ENCODE measurements at regions of chr12 and their contacts with region 1.

Region 1: GRCh38 chr12:16385782-16386646 is 38.6 kb downstream of the MGST1 start:
- DNase-seq: no peak
- ATAC-seq: peak; percentile 80
- H3K4me3 ChIP-seq: peak overlapping the region in 1 of 2 donors; percentile 11
- H3K27ac ChIP-seq: no peak overlapping the region
- H3K4me1 ChIP-seq: no peaks in the 10 kb centered on the region
- H3K27me3 ChIP-seq: no peaks in the 10 kb centered on the region

Region 2: DNA sequence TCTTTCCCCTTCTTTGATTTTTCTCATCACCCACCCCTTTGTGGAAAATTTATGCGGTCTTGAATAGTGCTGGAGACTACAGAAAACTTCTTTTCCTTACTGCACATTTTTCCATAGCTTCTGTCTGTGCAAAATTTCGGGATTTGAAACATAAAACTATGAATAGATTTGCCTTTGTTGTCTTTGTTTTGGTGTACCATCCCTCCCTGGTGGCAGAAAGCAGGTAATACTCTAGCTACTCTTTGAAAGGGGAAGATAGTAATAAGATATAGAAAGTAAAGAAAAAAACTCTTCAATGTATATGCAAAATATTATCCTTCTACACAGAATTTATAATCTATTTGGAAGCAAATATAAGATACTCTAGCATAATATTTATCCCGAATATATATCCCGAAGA is 299.1 kb after region 1 on chr12:
- intact Hi-C with region 1: loop called in 1 of 2 experiments (anchors 10 kb)
- DNase-seq: no peak
- ATAC-seq: no peak
- H3K4me3 ChIP-seq: no peak overlapping the region
- H3K27ac ChIP-seq: no peak overlapping the region
- H3K4me1 ChIP-seq: no peaks in the 10 kb centered on the region
- H3K27me3 ChIP-seq: no peaks in the 10 kb centered on the region

Region 3: GRCh38 chr12:17642340-17642650 is 1256.3 kb after region 1 on chr12:
- intact Hi-C with region 1: loop called in 1 of 2 experiments (anchors 5 kb)
- DNase-seq: no peak
- ATAC-seq: no peak
- H3K4me3 ChIP-seq: no peak overlapping the region
- H3K27ac ChIP-seq: no peak overlapping the region
- H3K4me1 ChIP-seq: no peaks in the 10 kb centered on the region
- H3K27me3 ChIP-seq: no peaks in the 10 kb centered on the region

Measured in aorta (tissue), 5 donors.